H1 (cell line): ENCODE measurements at regions of chr12 and their contacts with region 1.

Region 1: DNA sequence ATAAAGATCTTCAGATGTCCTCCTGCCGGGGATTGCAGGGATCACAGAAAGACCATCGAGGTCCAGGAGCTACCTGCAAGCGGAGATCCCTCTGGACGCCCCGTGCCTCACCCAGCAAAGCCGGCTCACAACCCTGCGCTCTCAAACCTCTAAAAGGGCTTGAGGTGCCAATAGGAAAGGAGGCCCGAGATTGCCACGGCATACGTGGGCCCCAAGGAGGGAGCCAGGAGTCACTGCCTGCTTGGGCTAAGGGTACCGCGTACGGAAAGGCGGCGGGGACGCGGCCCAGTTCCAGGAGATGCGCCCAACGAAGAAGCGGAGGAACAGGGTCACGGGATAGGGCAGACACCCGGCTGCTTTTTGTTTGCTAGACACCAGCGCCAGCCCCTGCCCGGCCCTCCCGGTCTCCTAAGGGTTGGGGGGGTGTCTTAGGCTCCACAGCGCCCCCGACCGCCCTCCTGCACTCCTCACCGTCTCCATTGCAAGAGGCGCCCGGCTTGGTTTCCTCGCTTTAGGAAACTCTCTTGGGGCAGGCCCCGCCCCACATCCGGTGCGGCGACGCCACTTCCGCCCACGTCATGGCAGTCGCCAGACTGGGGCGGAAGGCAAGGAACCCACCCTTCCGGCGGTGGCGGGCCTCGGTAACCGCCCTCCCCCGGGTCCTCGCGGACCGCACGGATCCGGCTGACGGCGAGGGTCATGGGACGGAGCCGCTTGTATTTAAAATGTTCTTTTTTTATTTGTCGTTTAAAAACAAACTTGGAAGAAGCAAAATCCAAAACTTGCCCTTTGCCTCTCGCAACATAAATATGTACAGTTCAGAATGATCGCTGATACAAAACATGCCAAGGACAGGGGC is at the start of gene PRKAG1:
- DNase-seq: peak; percentile 96
- H3K4me3 ChIP-seq: peak within 1 kb of the TSS; percentile 65 to 92 (median 80)
- H3K27ac ChIP-seq: peak within 1 kb of the TSS; percentile 85
- H3K4me1 ChIP-seq: peaks cover 0 to 6% (median 1%) of the 10 kb centered on the region in 4 experiments; a peak in 4 of 7 replicates
- H3K27me3 ChIP-seq: no peaks in the 10 kb centered on the region
- CTCF ChIP-seq: peak; percentile 51 to 66 (median 64)
- EP300 ChIP-seq: peak in 1 of 2 experiments; percentile 48; a peak in 1 of 3 replicates
- POLR2A ChIP-seq: peak; percentile 90 to 96
- RAD21 ChIP-seq: peak; percentile 29 to 32; a peak in 3 of 4 replicates
- total RNA-seq, gene PRKAG1: 36.3 and 38.6 TPM in 2 replicates

Region 2: DNA sequence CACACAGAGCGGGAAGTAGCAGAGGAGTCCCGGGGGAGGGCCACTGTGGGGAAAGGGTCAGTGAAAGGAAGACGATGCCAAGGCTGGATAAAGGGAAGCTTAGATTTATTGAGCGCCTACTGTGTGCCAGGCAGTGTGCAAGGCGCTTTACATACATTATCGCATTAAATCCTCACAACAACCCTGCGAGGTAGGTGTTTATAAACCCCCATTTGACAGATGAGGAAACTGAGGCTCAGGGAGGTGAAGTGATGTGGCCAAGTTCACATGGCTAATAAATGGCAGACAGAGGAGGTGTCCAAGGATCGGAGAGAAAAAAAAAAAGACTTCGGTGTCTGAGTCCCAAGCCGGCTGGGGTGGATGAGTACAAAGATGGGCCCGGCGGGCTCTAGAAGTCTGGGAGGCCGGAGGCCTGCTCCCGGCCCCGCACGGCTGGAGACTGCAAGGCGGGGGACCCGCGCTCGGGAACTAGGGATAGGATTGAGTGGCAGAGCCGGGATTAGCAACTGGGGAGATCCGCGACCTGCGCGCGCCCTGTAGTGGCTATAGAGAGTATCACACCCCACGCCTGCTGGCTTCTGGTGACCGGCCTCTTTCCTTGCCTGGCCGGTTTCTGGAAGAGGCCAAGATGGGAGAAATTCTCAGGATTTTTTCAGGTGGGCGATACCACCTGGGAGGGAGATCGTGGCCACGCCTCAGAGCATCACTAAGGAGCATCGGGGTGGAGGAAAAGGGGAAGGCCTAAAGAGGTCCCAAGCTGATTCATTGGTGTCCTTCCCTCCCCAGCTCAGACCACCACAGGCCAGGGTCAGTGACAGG is 23.2 kb before region 1 on chr12:
- CTCF ChIA-PET with region 1: interaction called, 207 read pairs
- POLR2A ChIA-PET with region 1: interaction called, 24 read pairs
- DNase-seq: peak in 1 of 2 experiments; percentile 92
- H3K4me3 ChIP-seq: peak overlapping the region in 1 of 4 experiments; percentile 40; a peak in 2 of 8 replicates
- H3K27ac ChIP-seq: no peak overlapping the region
- H3K4me1 ChIP-seq: peaks cover 9 to 29% (median 16%) of the 10 kb centered on the region in 4 experiments
- H3K27me3 ChIP-seq: peaks cover 50 to 74% (median 70%) of the 10 kb centered on the region in 4 experiments
- CTCF ChIP-seq: peak; percentile 74 to 91 (median 76)
- EP300 ChIP-seq: peak in 1 of 2 experiments; percentile 47; a peak in 1 of 3 replicates
- POLR2A ChIP-seq: no peak
- RAD21 ChIP-seq: peak; percentile 80 to 83

Region 3: GRCh38 chr12:49031553-49032162 is 13.2 kb after region 1 on chr12:
- CTCF ChIA-PET with region 1: interaction called, 34 read pairs
- POLR2A ChIA-PET with region 1: interaction called, 339 read pairs
- DNase-seq: no peak
- H3K4me3 ChIP-seq: no peak overlapping the region
- H3K27ac ChIP-seq: no peak overlapping the region
- H3K4me1 ChIP-seq: no peaks in the 10 kb centered on the region
- H3K27me3 ChIP-seq: no peaks in the 10 kb centered on the region
- CTCF ChIP-seq: no peak
- EP300 ChIP-seq: no peak
- POLR2A ChIP-seq: no peak
- RAD21 ChIP-seq: no peak

Region 4: DNA sequence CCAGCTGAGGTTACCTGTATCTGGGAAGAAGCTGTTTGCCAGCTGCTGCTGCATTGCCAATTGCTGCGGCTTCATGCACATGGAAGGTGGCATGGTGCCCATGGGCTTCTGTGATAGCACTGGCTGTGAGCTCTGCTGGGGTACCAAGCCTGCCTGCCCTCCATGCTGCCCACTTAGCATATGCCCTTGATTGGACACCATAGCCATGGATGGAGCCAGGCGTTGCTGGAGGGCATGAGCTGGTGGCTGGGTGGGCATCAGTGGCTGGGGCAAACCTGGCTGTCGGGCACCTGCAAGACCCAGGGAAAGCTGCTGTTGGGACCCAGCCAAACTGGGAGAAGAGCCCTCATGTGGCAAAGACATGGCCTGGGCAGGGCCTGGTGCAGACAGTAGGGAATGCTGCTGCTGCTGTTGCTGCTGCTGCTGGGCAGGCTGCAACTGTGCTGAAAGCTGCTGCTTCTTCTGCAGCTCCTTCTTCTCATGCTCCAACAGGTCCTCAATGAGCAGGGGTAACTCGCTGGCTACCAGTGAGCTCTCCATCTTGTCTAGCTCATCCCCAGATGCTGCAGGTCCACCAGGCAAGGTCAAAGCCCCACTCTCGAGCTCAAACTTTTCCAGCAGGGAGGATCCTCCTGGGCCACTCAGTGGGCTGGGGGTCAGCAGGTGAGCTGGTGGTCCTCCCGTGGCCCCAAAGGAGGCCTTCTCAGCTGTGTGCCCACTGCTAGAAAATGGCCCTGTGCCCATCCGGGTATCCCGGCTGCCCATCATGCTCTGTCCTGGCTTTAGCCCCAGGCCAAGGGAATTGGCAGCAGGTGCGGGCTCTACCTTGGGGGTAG is 18.8 kb after region 1 on chr12:
- CTCF ChIA-PET with region 1: interaction called, 34 read pairs
- POLR2A ChIA-PET with region 1: interaction called, 339 read pairs
- DNase-seq: no peak
- H3K4me3 ChIP-seq: no peak overlapping the region
- H3K27ac ChIP-seq: no peak overlapping the region
- H3K4me1 ChIP-seq: no peaks in the 10 kb centered on the region
- H3K27me3 ChIP-seq: no peaks in the 10 kb centered on the region
- CTCF ChIP-seq: no peak
- EP300 ChIP-seq: no peak
- POLR2A ChIP-seq: no peak
- RAD21 ChIP-seq: no peak

Region 5: DNA sequence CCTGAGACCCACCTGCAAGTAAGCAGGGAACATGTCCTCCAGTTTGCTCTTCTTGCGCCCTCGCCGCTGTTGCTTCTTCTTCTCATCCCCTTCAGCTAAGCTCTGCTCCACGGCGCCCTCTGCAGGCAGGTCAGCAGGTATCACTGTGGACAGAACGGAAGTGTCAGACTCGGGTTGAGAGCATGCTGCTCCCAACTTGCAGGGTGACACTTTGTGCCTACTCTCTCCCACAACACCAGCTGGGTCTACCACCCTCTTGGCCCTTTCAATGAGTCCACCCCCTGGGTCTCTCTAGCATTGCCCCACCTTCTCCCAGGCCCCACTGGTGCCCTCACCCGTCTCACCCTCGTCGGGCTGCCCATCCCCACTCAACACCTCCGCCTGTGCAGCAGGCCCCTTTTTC is 25.4 kb after region 1 on chr12:
- CTCF ChIA-PET with region 1: interaction called, 23 read pairs
- POLR2A ChIA-PET with region 1: interaction called, 339 read pairs
- DNase-seq: peak in 1 of 2 experiments; percentile 96
- H3K4me3 ChIP-seq: no peak overlapping the region
- H3K27ac ChIP-seq: no peak overlapping the region
- H3K4me1 ChIP-seq: no peaks in the 10 kb centered on the region
- H3K27me3 ChIP-seq: no peaks in the 10 kb centered on the region
- CTCF ChIP-seq: peak in 2 of 3 experiments; percentile 71 to 99; a peak in 3 of 4 replicates
- EP300 ChIP-seq: no peak
- POLR2A ChIP-seq: no peak
- RAD21 ChIP-seq: peak; percentile 19 to 20; a peak in 2 of 4 replicates

Region 6: DNA sequence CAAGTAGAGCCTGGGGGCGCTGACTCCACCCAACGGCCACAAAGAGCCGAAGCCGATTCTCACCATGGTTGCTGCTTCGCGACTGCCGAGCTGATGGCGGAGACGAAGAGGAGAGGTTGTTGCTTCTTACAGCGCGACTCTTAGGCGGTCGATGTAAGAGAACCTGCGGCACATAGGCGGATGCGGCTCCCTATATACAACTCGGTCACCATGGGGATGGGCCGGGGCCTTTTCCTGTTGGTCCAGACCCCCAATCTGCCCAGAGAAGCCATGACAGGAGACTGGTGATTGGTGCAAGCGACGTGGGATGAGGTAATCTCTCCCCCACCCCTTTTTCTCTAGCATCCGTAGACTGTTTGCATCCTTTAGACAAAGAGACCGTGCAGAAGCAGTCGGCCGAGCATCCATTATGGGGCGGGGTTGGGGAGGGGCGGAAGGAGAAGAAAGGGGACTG is 170.5 kb after region 1 on chr12 and contains the start of gene TUBA1A:
- CTCF ChIA-PET with region 1: no interaction called
- POLR2A ChIA-PET with region 1: no interaction called
- DNase-seq: peak; percentile 89 to 95
- H3K4me3 ChIP-seq: peak within 1 kb of the TSS; percentile 57 to 93 (median 84)
- H3K27ac ChIP-seq: peak within 1 kb of the TSS; percentile 76
- H3K4me1 ChIP-seq: no peaks in the 10 kb centered on the region; a peak in 2 of 7 replicates
- H3K27me3 ChIP-seq: no peaks in the 10 kb centered on the region
- CTCF ChIP-seq: no peak
- EP300 ChIP-seq: no peak
- POLR2A ChIP-seq: peak; percentile 93 to 96
- RAD21 ChIP-seq: no peak
- total RNA-seq, gene TUBA1A: 283 and 290 TPM in 2 replicates